Lower leg skin (tissue), 4 donors: ENCODE measurements at regions of chr2 and their contacts with region 1.

Region 1: GRCh38 chr2:212264187-212264586 is 274.4 kb downstream of the ERBB4 start:
- DNase-seq: no peak
- H3K4me3 ChIP-seq: no peak overlapping the region
- CTCF ChIP-seq: no peak
- POLR2A ChIP-seq: no peak

Region 2: GRCh38 chr2:211455216-211455841 is 808.9 kb before region 1 on chr2:
- intact Hi-C with region 1: loop called (anchors 10 kb)
- DNase-seq: no peak
- H3K4me3 ChIP-seq: no peak overlapping the region
- CTCF ChIP-seq: no peak
- POLR2A ChIP-seq: no peak

Region 3: GRCh38 chr2:211802666-211803065 is 461.5 kb before region 1 on chr2:
- intact Hi-C with region 1: no loop called
- DNase-seq: no peak
- H3K4me3 ChIP-seq: no peak overlapping the region
- CTCF ChIP-seq: no peak
- POLR2A ChIP-seq: no peak

Region 4: DNA sequence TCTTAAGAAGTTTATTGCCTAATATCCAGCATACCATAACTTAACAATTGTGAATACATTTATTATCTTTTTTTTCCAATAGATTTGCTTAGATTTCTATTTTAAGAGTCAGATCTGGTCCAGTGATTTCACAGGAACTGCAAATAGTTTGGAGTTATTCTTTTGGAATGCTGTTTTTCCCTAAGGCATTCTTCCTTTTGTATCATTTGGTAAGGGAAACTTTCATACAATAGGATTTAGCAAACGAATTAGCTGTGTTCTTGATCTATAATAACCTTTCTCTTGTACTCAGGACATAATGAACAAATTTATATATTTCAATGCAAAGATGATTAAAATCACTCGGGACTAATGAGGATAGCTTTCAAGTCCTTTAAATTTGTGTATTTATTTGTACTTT is 72.8 kb after region 1 on chr2:
- intact Hi-C with region 1: no loop called
- DNase-seq: no peak
- H3K4me3 ChIP-seq: no peak overlapping the region
- CTCF ChIP-seq: no peak
- POLR2A ChIP-seq: no peak